Left ventricle myocardium superior (tissue), 1 donor: ENCODE measurements at regions of chr1 and their contacts with region 1.

Region 1: GRCh38 chr1:173714759-173715537 is at the start of gene KLHL20:
- DNase-seq: peak; percentile 79
- ATAC-seq: peak; percentile 99
- total RNA-seq, gene KLHL20: 16.4 TPM

Region 2: GRCh38 chr1:173429471-173430402 is 285.2 kb before region 1 on chr1:
- intact Hi-C with region 1: loop called (anchors 10 kb)
- DNase-seq: peak; percentile 90
- ATAC-seq: peak; percentile 98

Region 3: DNA sequence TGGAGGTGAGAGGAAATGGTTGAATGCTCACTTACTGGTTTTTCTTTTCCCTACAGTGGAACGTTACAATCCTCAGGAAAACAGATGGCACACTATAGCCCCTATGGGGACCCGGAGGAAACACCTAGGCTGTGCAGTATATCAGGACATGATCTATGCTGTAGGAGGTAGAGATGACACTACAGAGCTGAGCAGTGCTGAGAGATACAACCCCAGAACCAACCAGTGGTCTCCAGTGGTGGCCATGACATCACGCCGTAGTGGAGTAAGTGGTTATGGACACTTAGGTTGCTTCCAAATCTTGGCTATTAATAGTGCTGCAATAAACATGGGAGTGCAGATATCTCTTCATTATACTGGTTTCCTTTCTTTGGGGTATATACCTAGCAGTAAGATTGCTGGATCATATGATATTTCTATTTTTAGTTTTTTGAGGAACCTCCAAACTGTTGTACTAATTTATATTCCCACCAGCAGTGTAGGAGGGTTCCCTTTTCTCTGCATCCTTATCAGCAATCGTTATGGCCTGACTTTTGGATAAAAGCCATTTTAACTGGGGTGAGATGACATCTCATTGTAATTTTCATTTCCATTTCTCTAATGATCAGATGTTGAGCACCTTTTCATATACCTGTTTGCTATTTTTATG is 60.8 kb after region 1 on chr1:
- intact Hi-C with region 1: no loop called
- DNase-seq: no peak
- ATAC-seq: no peak